ENCODE measurements at regions of chr12 and their contacts with region 1.

Region 1: DNA sequence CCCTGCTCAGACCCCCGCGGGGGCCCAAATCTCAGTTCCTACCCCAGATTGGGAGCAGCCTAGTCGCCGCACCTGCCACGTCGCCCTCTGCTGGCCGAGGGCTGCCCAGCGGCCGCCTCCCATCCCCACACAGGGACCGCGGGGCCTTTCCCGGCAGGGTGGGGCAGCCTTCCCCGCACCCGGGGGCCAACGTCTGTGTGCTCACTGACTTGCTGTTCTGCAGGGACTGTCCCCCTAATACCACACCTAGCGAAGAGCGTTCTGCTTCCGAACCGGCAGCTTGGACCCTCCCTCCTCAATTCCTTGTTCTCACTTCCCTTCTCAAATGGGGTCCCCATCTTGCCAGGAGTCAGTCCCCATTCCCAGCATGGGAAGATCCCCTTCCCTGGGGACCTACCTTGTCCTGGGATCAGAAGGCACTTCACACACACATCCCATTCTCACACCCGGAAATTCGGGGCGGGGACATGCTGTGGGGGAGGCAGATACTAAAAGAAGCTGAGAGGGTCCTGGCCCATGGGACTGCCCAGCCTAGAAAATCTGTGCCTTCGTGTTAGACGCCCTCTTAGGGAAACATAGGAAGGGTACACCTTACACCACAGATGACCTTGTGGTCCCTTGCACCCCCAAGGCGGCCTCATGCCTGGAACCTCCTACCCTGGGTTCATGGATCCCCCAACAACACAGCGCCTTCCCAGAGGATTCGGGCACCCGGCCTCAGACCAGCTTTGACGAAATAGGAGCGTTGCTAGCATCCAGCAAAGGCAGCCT is 16.4 kb downstream of the ACVRL1 start:
- DNase-seq: peak; percentile 69
- H3K4me3 ChIP-seq: no peak overlapping the region
- H3K27ac ChIP-seq: peak overlapping the region; percentile 99
- H3K4me1 ChIP-seq: peaks cover 54% of the 10 kb centered on the region
- H3K27me3 ChIP-seq: no peaks in the 10 kb centered on the region
- CTCF ChIP-seq: peak; percentile 92 to 98
- POLR2A ChIP-seq: peak; percentile 87

Region 2: GRCh38 chr12:51726931-51727330 is 196.8 kb before region 1 on chr12:
- CTCF ChIA-PET with region 1: no interaction called
- POLR2A ChIA-PET with region 1: no interaction called
- dilution Hi-C with region 1: no loop called
- intact Hi-C with region 1: no loop called
- DNase-seq: peak; percentile 18
- H3K4me3 ChIP-seq: no peak overlapping the region
- H3K27ac ChIP-seq: no peak overlapping the region
- H3K4me1 ChIP-seq: no peaks in the 10 kb centered on the region
- H3K27me3 ChIP-seq: no peaks in the 10 kb centered on the region
- CTCF ChIP-seq: no peak
- POLR2A ChIP-seq: no peak

Region 3: GRCh38 chr12:51886021-51886322 is 37.7 kb before region 1 on chr12:
- CTCF ChIA-PET with region 1: interaction called, 55 read pairs
- POLR2A ChIA-PET with region 1: interaction called, 3 read pairs
- dilution Hi-C with region 1: no loop called
- intact Hi-C with region 1: no loop called
- DNase-seq: peak; percentile 98
- H3K4me3 ChIP-seq: peak overlapping the region in 1 of 3 experiments; percentile 7
- H3K27ac ChIP-seq: peak overlapping the region; percentile 89
- H3K4me1 ChIP-seq: peaks cover 41% of the 10 kb centered on the region
- H3K27me3 ChIP-seq: no peaks in the 10 kb centered on the region
- CTCF ChIP-seq: no peak
- POLR2A ChIP-seq: peak; percentile 76

Region 4: GRCh38 chr12:51898937-51899336 is 24.7 kb before region 1 on chr12:
- CTCF ChIA-PET with region 1: interaction called, 393 read pairs
- POLR2A ChIA-PET with region 1: interaction called, 10 read pairs
- dilution Hi-C with region 1: no loop called
- intact Hi-C with region 1: loop called (anchors 1 kb)
- DNase-seq: peak; percentile 92
- H3K4me3 ChIP-seq: no peak overlapping the region
- H3K27ac ChIP-seq: peak overlapping the region; percentile 95
- H3K4me1 ChIP-seq: peaks cover 67% of the 10 kb centered on the region
- H3K27me3 ChIP-seq: no peaks in the 10 kb centered on the region
- CTCF ChIP-seq: no peak
- POLR2A ChIP-seq: peak; percentile 12

Region 5: GRCh38 chr12:51911788-51912711 is 11.6 kb before region 1 on chr12:
- CTCF ChIA-PET with region 1: interaction called, 157 read pairs
- POLR2A ChIA-PET with region 1: interaction called, 12 read pairs
- dilution Hi-C with region 1: no loop called
- intact Hi-C with region 1: loop called (anchors 1 kb)
- DNase-seq: peak; percentile 86
- H3K4me3 ChIP-seq: peak overlapping the region; percentile 5 to 57 (median 44)
- H3K27ac ChIP-seq: peak overlapping the region; percentile 99
- H3K4me1 ChIP-seq: peaks cover 59% of the 10 kb centered on the region
- H3K27me3 ChIP-seq: no peaks in the 10 kb centered on the region
- CTCF ChIP-seq: no peak
- POLR2A ChIP-seq: peak; percentile 10

Region 6: DNA sequence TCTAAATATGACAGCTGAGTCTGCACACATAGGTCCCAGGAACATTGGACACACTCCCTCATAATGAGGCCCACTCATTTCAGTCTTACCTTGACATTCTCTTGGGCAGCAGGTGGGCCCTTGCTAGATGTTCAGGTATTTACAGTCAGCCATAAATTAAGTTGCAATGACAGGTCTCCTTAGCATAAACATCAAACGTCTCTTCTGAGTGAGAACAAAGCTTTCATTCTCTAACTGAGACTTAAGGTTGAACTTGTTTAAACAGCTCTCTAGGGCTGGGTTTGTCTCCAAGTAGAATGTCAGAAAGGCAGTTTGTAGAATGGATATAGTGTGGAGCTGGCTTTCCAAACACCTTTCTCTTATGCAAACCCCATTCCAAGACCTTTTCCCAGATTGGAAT is 38.1 kb after region 1 on chr12:
- CTCF ChIA-PET with region 1: interaction called, 12 read pairs
- POLR2A ChIA-PET with region 1: interaction called, 9 read pairs
- dilution Hi-C with region 1: no loop called
- intact Hi-C with region 1: no loop called
- DNase-seq: peak; percentile 53
- H3K4me3 ChIP-seq: no peak overlapping the region
- H3K27ac ChIP-seq: no peak overlapping the region
- H3K4me1 ChIP-seq: peaks cover 29% of the 10 kb centered on the region
- H3K27me3 ChIP-seq: no peaks in the 10 kb centered on the region
- CTCF ChIP-seq: no peak
- POLR2A ChIP-seq: no peak

Region 7: DNA sequence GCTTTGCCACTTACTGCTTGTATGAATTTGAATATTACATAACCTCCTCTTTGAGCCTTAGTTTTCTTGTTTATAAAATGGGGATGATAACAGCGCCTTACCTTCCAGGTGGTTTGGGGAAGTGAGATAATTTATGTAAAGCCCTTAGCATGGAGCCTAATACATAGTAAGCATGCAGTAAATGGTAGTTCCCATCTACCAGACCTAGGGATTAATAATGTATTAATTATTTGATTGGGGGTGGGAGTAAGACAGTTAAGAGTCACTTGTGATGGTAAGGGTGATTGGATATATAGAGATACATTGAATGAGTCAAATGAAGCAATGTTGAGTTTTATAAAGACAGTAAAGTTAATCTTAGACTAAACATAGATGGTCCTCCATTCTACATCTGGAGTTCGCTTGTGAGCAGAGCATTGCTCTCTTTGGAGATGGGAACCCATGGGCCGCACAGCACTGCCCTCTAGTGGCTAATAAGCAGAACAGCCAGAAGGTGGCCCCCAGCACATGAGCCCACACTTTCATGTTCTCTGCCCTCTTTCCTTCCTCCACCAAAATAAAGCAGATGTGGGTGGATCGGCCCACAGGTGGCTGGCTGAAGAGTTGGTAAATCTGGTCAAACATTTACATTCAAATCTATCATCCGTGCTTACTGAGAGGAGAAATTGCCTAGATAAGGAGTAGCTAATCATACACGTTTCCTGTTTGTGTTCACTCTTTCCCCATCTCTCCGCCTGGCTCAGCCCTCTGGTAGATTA is 56.5 kb after region 1 on chr12:
- CTCF ChIA-PET with region 1: interaction called, 46 read pairs
- POLR2A ChIA-PET with region 1: no interaction called
- dilution Hi-C with region 1: no loop called
- intact Hi-C with region 1: loop called (anchors 1 kb)
- DNase-seq: peak; percentile 84
- H3K4me3 ChIP-seq: no peak overlapping the region
- H3K27ac ChIP-seq: no peak overlapping the region
- H3K4me1 ChIP-seq: peaks cover 36% of the 10 kb centered on the region
- H3K27me3 ChIP-seq: no peaks in the 10 kb centered on the region
- CTCF ChIP-seq: peak; percentile 90 to 97
- POLR2A ChIP-seq: no peak